Pancreas (tissue), 10 donors: ENCODE measurements at regions of chr1 and their contacts with region 1.

Region 1: GRCh38 chr1:239386453-239387303 is at the start of gene CHRM3:
- DNase-seq: peak; percentile 88 to 94 (median 90)
- ATAC-seq: peak; percentile 77 to 88 (median 86)
- H3K4me3 ChIP-seq: peak within 1 kb of the TSS; percentile 64 to 87 (median 80)
- H3K27ac ChIP-seq: peak within 1 kb of the TSS; percentile 94 to 96 (median 94)
- H3K4me1 ChIP-seq: peaks cover 0 to 14% (median 4%) of the 10 kb centered on the region in 3 donors
- H3K27me3 ChIP-seq: no peaks in the 10 kb centered on the region
- CTCF ChIP-seq: peak in 2 of 4 donors; percentile 20
- total RNA-seq, gene CHRM3: 21.9 to 31.8 (median 26.4) TPM

Region 2: GRCh38 chr1:239308701-239309333 is 77.9 kb before region 1 on chr1:
- intact Hi-C with region 1: loop called in 1 of 3 experiments (anchors 10 kb)
- DNase-seq: peak; percentile 37 to 69 (median 55)
- ATAC-seq: peak; percentile 91 to 96 (median 93)
- H3K4me3 ChIP-seq: no peak overlapping the region
- H3K27ac ChIP-seq: no peak overlapping the region
- H3K4me1 ChIP-seq: peaks cover 0 to 3% (median 0%) of the 10 kb centered on the region in 3 donors
- H3K27me3 ChIP-seq: no peaks in the 10 kb centered on the region
- CTCF ChIP-seq: peak in 3 of 4 donors; percentile 47 to 59 (median 49)

Region 3: GRCh38 chr1:239417986-239418640 is 31.4 kb after region 1 on chr1:
- intact Hi-C with region 1: no loop called
- DNase-seq: no peak
- ATAC-seq: no peak
- H3K4me3 ChIP-seq: no peak overlapping the region
- H3K27ac ChIP-seq: no peak overlapping the region
- H3K4me1 ChIP-seq: peaks cover 5 to 21% (median 9%) of the 10 kb centered on the region in 3 donors
- H3K27me3 ChIP-seq: no peaks in the 10 kb centered on the region
- CTCF ChIP-seq: no peak